BJ (cell line): ENCODE measurements at regions of chr2 and their contacts with region 1.

Region 1: GRCh38 chr2:9273486-9274130 is 67.0 kb downstream of the ASAP2 start:
- DNase-seq: no peak
- H3K4me3 ChIP-seq: no peak overlapping the region
- H3K27me3 ChIP-seq: no peaks in the 10 kb centered on the region
- CTCF ChIP-seq: no peak

Region 2: DNA sequence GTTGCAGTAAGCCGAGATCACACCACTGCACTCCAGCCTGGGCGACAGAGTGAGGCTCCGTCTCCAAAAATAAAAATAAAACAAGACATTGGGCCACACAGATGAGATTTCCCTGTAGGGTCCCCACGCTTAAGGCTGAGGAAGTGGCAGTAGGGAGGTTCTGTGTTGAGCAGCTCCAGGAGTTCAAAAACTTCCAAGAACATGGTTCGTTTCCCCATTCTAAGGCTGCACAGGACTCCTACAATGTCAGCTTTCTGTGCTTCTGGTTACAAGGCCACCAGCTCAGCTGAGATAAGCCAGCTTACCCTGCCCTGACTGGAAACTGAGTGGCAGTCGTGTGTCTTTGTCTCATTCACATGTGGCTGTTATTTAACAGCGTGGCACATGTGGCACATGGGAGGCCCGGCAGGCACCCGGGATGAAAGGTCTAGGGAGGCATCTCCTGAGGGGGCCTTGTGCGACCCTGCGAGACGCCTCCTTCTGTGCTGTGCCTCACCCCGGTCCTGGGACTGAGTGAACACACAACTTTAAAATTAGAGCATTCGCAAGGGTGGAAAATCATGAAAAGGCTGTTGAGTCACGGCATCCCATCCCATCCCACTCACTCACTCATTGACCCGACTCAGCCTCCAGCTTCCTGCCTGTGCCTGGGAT is 142.0 kb after region 1 on chr2:
- CTCF ChIA-PET with region 1: no interaction called
- POLR2A ChIA-PET with region 1: no interaction called
- DNase-seq: no peak
- H3K4me3 ChIP-seq: no peak overlapping the region
- H3K27me3 ChIP-seq: no peaks in the 10 kb centered on the region
- CTCF ChIP-seq: no peak

Region 3: GRCh38 chr2:9524291-9524690 is 250.7 kb after region 1 on chr2:
- CTCF ChIA-PET with region 1: no interaction called
- POLR2A ChIA-PET with region 1: interaction called, 15 read pairs
- DNase-seq: no peak
- H3K4me3 ChIP-seq: no peak overlapping the region
- H3K27me3 ChIP-seq: no peaks in the 10 kb centered on the region
- CTCF ChIP-seq: no peak